Endothelial cell of umbilical vein (primary cell): ENCODE measurements at regions of chr2 and their contacts with region 1.

Region 1: GRCh38 chr2:154850532-154850931 is 152.0 kb downstream of the KCNJ3 start:
- DNase-seq: no peak
- H3K4me3 ChIP-seq: no peak overlapping the region
- H3K27ac ChIP-seq: no peak overlapping the region
- H3K4me1 ChIP-seq: no peaks in the 10 kb centered on the region
- H3K27me3 ChIP-seq: no peaks in the 10 kb centered on the region
- CTCF ChIP-seq: no peak
- POLR2A ChIP-seq: no peak

Region 2: GRCh38 chr2:154637456-154637855 is 213.1 kb before region 1 on chr2:
- CTCF ChIA-PET with region 1: no interaction called
- POLR2A ChIA-PET with region 1: no interaction called
- dilution Hi-C with region 1: no loop called
- intact Hi-C with region 1: loop called (anchors 5 kb)
- DNase-seq: no peak
- H3K4me3 ChIP-seq: no peak overlapping the region
- H3K27ac ChIP-seq: no peak overlapping the region
- H3K4me1 ChIP-seq: no peaks in the 10 kb centered on the region
- H3K27me3 ChIP-seq: no peaks in the 10 kb centered on the region
- CTCF ChIP-seq: no peak
- POLR2A ChIP-seq: no peak